Activated B cell treated with CpG ODN at 0.5 μM for 24 hours (primary cell): ENCODE measurements at regions of chr2 and their contacts with region 1.

Region 1: DNA sequence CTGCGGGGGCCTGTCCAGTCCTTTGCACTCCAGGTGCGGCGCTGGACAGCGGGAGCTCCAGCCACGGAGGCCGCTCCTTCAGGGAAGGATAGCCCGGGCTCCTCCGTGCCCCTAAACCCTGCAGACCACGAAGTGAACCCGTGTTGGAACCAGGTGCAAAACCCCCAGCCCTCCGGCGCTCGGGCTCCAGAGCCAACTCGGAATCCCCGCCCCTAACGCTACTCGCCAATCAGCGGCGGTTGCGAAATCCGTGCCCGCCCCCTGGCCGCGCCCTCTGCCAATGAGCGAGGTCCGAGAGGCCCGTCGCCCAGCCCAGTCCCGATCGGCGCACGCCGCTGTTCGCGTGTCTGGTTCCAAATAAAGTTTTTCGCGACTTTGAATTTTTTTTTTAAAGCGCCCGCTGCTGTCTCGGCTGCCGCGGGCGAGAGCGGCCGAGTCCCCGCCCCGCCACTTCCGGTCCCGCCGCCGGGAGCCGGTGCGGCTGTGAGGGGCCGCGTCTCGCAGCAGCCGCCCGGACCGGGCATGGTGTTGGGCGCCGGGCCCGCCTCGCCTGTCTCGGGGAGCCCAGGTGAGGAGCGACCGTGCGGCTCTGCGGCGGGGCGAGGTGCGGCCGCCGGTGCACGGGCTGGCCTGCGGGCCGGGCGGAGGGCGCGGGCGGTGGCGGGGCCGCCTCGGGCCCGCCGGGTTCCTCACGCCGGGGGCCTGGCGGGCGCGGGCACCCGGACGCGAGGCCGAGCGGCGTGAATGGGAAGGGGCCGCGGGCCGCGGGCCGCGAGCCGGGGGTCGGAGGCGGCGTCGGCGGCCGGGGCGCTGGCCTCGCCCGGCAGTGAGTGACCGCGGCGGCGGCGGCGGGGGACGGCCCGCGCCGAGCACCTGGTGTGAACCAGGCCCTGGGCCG is at the start of gene UBE2F:
- DNase-seq: peak; percentile 97
- ATAC-seq: peak; percentile 95
- H3K4me3 Mint-ChIP-seq: peak within 1 kb of the TSS; percentile 84
- H3K27ac Mint-ChIP-seq: peak within 1 kb of the TSS; percentile 82
- H3K4me1 Mint-ChIP-seq: peaks cover 34% of the 10 kb centered on the region
- H3K27me3 Mint-ChIP-seq: no peaks in the 10 kb centered on the region
- CTCF ChIP-seq: no peak
- total RNA-seq, gene UBE2F: 32.4 and 41.2 TPM in 2 replicates

Region 2: GRCh38 chr2:237691908-237692600 is 274.8 kb before region 1 on chr2:
- CTCF ChIA-PET with region 1: no interaction called
- POLR2A ChIA-PET with region 1: no interaction called
- intact Hi-C with region 1: loop called (anchors 10 kb)
- DNase-seq: peak; percentile 91
- ATAC-seq: peak; percentile 69
- H3K4me3 Mint-ChIP-seq: peak overlapping the region; percentile 84
- H3K27ac Mint-ChIP-seq: peak overlapping the region; percentile 91
- H3K4me1 Mint-ChIP-seq: peaks cover 80% of the 10 kb centered on the region
- H3K27me3 Mint-ChIP-seq: no peaks in the 10 kb centered on the region
- CTCF ChIP-seq: no peak

Region 3: GRCh38 chr2:237895544-237896506 is 71.0 kb before region 1 on chr2:
- CTCF ChIA-PET with region 1: no interaction called
- POLR2A ChIA-PET with region 1: no interaction called
- intact Hi-C with region 1: loop called (anchors 1 kb)
- DNase-seq: no peak
- ATAC-seq: no peak
- H3K4me3 Mint-ChIP-seq: no peak overlapping the region
- H3K27ac Mint-ChIP-seq: no peak overlapping the region
- H3K4me1 Mint-ChIP-seq: peaks cover 47% of the 10 kb centered on the region
- H3K27me3 Mint-ChIP-seq: no peaks in the 10 kb centered on the region
- CTCF ChIP-seq: no peak

Region 4: DNA sequence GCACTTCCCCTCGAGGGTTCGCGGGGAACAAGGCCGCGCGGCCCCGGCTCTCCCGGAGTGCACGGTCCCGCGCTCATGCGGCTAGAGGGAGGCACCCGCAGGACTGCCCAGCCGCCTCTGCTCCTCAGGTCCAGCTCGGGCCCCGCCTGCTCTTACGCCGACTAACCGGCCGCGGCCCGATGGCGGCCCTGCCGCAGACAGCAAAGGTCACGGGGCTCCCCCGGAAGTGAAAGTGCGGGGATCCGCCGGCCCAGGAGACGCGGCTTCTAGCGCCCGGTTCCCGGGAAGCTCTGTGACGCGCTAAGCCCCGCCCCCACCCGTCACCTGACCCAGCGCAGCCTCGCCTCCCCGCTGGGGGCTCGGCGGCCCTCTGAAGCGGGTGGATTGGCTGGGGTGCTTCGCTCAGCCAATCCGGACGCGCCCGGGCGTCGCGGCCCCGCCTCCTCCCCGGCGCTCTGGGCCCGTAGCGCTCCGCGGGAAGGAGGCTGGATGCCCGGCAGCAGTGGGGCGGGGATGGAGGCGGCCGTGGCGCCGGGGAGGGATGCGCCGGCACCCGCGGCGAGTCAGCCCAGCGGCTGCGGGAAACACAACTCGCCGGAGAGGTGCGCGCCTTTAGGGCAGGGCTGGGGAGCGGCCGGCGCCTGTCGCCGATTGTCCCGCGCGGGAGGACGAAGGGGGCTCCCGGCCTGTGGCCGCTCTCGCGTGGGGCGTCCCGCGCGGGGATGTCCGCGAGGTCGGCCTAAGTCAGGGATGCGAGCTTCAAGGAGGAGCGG is 93.9 kb after region 1 on chr2 and contains the start of gene SCLY:
- CTCF ChIA-PET with region 1: no interaction called
- POLR2A ChIA-PET with region 1: no interaction called
- intact Hi-C with region 1: loop called (anchors 1 kb)
- DNase-seq: peak; percentile 89
- ATAC-seq: peak; percentile 98
- H3K4me3 Mint-ChIP-seq: peak within 1 kb of the TSS; percentile 85
- H3K27ac Mint-ChIP-seq: peak within 1 kb of the TSS; percentile 78
- H3K4me1 Mint-ChIP-seq: peaks cover 20% of the 10 kb centered on the region
- H3K27me3 Mint-ChIP-seq: peaks cover 10% of the 10 kb centered on the region
- CTCF ChIP-seq: no peak
- total RNA-seq, gene SCLY: 24.1 and 26.9 TPM in 2 replicates

Region 5: GRCh38 chr2:238106686-238107524 is 140.1 kb after region 1 on chr2:
- CTCF ChIA-PET with region 1: no interaction called
- POLR2A ChIA-PET with region 1: no interaction called
- intact Hi-C with region 1: loop called (anchors 2 kb)
- DNase-seq: peak; percentile 15
- ATAC-seq: no peak
- H3K4me3 Mint-ChIP-seq: peak overlapping the region; percentile 88
- H3K27ac Mint-ChIP-seq: peak overlapping the region; percentile 86
- H3K4me1 Mint-ChIP-seq: peaks cover 35% of the 10 kb centered on the region
- H3K27me3 Mint-ChIP-seq: no peaks in the 10 kb centered on the region
- CTCF ChIP-seq: no peak

Region 6: DNA sequence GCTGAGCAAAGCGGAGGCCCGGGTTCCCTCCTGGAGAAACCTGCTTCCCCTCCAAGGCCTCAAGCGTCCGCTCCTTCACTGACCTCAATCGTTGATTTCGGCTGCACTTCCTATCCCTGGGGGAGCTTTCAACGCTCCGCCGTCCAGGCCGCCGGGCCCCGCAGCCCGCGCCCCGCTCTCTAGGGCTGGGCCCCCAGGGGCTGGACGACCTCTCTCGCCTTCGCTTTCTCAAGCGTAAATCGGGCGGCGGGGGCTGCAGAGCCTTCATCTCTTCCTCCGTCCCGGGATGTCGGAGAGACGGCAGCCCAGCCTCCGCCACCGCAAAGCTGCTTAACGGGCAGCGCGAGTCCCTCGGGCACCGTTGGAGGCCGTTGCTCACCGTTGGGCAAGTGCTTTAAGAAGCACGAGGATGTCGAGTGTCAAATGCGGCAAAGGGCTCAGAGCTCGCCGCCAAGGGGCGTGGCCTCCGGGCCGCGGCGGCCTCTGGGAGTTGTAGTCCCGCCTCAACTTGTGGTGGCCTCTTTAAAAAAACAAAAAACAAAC is 264.5 kb after region 1 on chr2:
- CTCF ChIA-PET with region 1: no interaction called
- POLR2A ChIA-PET with region 1: no interaction called
- intact Hi-C with region 1: loop called (anchors 2 kb)
- DNase-seq: peak; percentile 76
- ATAC-seq: peak; percentile 84
- H3K4me3 Mint-ChIP-seq: peak overlapping the region; percentile 90
- H3K27ac Mint-ChIP-seq: no peak overlapping the region
- H3K4me1 Mint-ChIP-seq: peaks cover 16% of the 10 kb centered on the region
- H3K27me3 Mint-ChIP-seq: peaks cover 17% of the 10 kb centered on the region
- CTCF ChIP-seq: no peak

Region 7: DNA sequence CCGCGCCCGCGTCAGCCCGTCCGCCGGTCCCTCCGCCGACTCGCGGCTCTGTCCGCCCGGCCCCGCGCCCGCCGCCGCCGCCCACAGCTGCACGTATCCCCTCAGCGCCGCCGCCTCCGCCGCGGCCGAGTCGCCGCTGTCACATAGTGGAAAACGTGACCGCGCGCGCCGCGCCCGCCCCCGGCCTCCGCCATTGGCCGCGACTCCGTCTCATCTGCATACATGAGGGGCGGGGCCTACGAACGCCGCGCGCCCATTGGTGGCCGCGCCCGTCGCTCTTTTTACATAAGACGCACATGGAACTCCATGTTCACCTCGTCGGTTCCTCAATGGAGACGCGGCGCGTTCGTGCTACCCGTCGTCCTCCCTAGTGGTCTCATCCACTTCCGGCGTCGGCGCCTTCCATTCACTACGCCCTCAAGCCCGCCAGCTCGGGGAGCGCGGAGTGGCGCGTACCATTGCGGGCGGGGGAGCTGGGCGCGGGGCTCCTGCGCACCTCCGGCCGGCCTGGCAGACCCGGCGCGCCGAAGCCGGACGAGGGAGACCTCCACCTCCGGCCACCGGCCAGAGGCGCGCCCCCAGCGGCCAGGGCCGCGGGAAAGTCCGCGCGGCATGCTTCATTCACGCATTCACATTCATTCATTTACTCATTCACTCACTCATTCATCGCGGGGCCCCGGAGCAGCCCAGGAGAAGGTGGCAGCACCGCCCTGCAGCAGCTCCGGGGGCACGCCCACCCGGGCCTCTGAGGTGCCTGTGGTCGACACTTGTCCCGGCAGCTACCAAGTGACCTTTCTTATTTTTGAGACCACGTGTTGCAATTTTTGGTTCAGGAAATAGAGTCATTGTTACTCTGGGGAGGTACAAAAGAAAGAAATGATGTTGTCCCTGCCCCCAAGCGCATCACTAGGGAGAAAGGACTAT is 322.1 kb after region 1 on chr2:
- CTCF ChIA-PET with region 1: no interaction called
- POLR2A ChIA-PET with region 1: no interaction called
- intact Hi-C with region 1: loop called (anchors 1 kb)
- DNase-seq: peak; percentile 95
- ATAC-seq: peak; percentile 87
- H3K4me3 Mint-ChIP-seq: peak overlapping the region; percentile 93
- H3K27ac Mint-ChIP-seq: peak overlapping the region; percentile 94
- H3K4me1 Mint-ChIP-seq: peaks cover 34% of the 10 kb centered on the region
- H3K27me3 Mint-ChIP-seq: no peaks in the 10 kb centered on the region
- CTCF ChIP-seq: no peak